ENCODE measurements at regions of chr2 and their contacts with region 1.

Region 1: GRCh38 chr2:162007447-162008040 is 66.5 kb downstream of the DPP4 start:
- DNase-seq: no peak
- H3K4me3 ChIP-seq: no peak overlapping the region
- H3K27ac ChIP-seq: no peak overlapping the region
- H3K4me1 ChIP-seq: no peaks in the 10 kb centered on the region
- H3K27me3 ChIP-seq: no peaks in the 10 kb centered on the region
- CTCF ChIP-seq: peak in 2 of 3 donors; percentile 32 to 68
- EP300 ChIP-seq: no peak
- POLR2A ChIP-seq: no peak

Region 2: DNA sequence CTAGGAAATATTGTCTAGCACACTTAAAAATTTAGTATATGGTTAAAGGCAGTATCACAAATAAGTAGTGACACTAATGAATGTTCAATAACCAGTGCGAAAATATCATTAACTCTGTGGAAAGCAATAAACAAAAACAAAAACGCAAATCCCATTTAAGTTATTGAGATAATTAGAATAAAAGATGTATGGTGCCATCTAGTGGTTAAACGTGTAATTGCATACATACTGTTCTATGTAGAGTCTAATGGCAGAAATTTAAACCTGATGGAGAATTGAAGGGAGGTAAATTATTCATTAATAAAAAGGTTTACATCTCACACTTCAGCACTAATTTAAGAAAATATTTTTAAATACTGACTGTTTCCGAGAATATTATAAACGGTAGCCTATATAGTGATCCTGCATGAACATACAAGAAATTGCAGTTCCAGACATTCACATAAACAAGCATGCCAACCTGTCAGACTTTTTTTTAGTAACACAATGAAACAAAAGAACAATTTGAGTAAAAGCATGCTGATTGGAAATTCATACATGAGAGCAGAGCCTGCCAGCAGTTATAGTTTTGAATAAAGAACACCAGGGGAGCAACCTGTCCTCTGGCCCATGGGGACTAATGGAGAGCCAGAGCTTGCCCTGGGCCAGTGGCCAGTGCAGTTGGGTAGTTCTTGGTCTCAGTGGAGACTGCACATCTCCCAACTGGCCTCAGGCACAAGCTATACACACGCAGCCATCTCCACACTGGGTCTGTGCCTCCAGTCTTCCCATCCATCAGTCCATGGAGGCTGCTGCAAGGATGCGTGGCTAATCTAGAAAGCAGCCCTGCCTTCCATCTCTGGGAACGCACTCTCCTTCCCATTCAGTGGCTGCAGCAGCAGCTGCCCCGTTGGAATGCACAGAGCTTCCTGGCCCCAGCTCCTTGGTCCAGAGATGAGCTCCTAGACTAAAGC is 116.5 kb after region 1 on chr2:
- intact Hi-C with region 1: loop called in 2 of 4 experiments (anchors 1 to 5 kb)
- DNase-seq: no peak
- H3K4me3 ChIP-seq: no peak overlapping the region
- H3K27ac ChIP-seq: no peak overlapping the region
- H3K4me1 ChIP-seq: no peaks in the 10 kb centered on the region
- H3K27me3 ChIP-seq: no peaks in the 10 kb centered on the region
- CTCF ChIP-seq: peak; percentile 38 to 54 (median 46)
- EP300 ChIP-seq: no peak
- POLR2A ChIP-seq: no peak

Region 3: GRCh38 chr2:163236553-163236952 is 1229.0 kb after region 1 on chr2:
- intact Hi-C with region 1: no loop called
- DNase-seq: no peak
- H3K4me3 ChIP-seq: no peak overlapping the region
- H3K27ac ChIP-seq: no peak overlapping the region
- H3K4me1 ChIP-seq: no peaks in the 10 kb centered on the region
- H3K27me3 ChIP-seq: no peaks in the 10 kb centered on the region
- CTCF ChIP-seq: no peak
- EP300 ChIP-seq: no peak
- POLR2A ChIP-seq: no peak

Measured in ovary (tissue), 10 donors.